ENCODE measurements at regions of chr3 and their contacts with region 1.

Region 1: GRCh38 chr3:138397983-138398382 is 36.4 kb upstream of the ESYT3 start:
- DNase-seq: no peak
- ATAC-seq: no peak
- H3K4me3 ChIP-seq: no peak overlapping the region
- H3K27ac ChIP-seq: peak overlapping the region in 8 of 12 donors; percentile 5 to 96 (median 74)
- H3K4me1 ChIP-seq: peaks cover 0 to 93% (median 29%) of the 10 kb centered on the region in 12 donors
- H3K27me3 ChIP-seq: no peaks in the 10 kb centered on the region
- CTCF ChIP-seq: peak in 5 of 12 donors; percentile 9 to 40 (median 33)
- POLR2A ChIP-seq: no peak

Region 2: DNA sequence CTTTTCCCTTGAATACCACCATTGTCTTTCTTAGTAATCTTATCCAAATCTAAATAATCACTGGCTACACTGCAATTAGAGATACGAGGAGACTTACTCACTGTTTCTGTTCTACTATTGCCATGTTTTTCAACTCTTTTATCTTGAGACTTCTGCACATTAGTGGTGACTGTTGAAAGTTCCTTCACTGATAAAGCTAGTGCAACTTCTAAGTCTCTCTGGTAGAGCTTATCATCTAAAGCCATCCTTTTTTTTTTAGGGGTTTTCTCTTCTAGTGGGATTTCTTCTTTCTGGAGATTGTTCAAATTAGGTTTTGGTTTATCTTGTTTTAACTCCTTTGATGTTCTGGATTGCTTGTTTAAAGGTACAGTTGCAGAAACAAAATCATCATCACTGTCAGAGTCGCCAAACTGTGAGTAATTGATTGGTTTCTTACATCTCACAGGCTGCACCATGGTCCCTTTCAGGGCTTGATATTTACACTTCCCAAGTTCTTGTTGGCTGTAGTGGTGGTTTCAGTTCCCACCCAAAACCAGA is 1498.3 kb before region 1 on chr3:
- intact Hi-C with region 1: no loop called
- DNase-seq: no peak
- ATAC-seq: no peak
- H3K4me3 ChIP-seq: no peak overlapping the region
- H3K27ac ChIP-seq: no peak overlapping the region
- H3K4me1 ChIP-seq: peaks cover 0 to 64% (median 13%) of the 10 kb centered on the region in 12 donors
- H3K27me3 ChIP-seq: no peaks in the 10 kb centered on the region
- CTCF ChIP-seq: no peak
- POLR2A ChIP-seq: no peak

Region 3: GRCh38 chr3:138329127-138329983 is 68.6 kb before region 1 on chr3 and contains the start of gene NME9:
- intact Hi-C with region 1: loop called in 3 of 10 experiments (anchors 2 to 5 kb)
- DNase-seq: peak; percentile 89 to 94 (median 92)
- ATAC-seq: peak; percentile 94 to 98 (median 96)
- H3K4me3 ChIP-seq: peak within 1 kb of the TSS; percentile 47 to 72 (median 66)
- H3K27ac ChIP-seq: peak within 1 kb of the TSS in 9 of 12 donors; percentile 16 to 69 (median 53)
- H3K4me1 ChIP-seq: peaks cover 0 to 18% (median 9%) of the 10 kb centered on the region in 12 donors
- H3K27me3 ChIP-seq: no peaks in the 10 kb centered on the region
- CTCF ChIP-seq: peak; percentile 17 to 62 (median 42)
- POLR2A ChIP-seq: no peak
- total RNA-seq, gene NME9: not detected

Region 4: GRCh38 chr3:138338811-138339210 is 59.2 kb before region 1 on chr3:
- intact Hi-C with region 1: loop called in 3 of 10 experiments (anchors 2 to 5 kb)
- DNase-seq: no peak
- ATAC-seq: peak; percentile 31 to 39 (median 36)
- H3K4me3 ChIP-seq: no peak overlapping the region
- H3K27ac ChIP-seq: no peak overlapping the region
- H3K4me1 ChIP-seq: peaks cover 0 to 12% (median 0%) of the 10 kb centered on the region in 12 donors
- H3K27me3 ChIP-seq: no peaks in the 10 kb centered on the region
- CTCF ChIP-seq: no peak
- POLR2A ChIP-seq: no peak

Region 5: GRCh38 chr3:138347960-138348753 is 49.8 kb before region 1 on chr3 and contains the start of gene MRAS:
- intact Hi-C with region 1: loop called in 6 of 10 experiments (anchors 2 to 5 kb)
- DNase-seq: peak; percentile 82 to 91 (median 89)
- ATAC-seq: peak; percentile 33 to 89 (median 72)
- H3K4me3 ChIP-seq: peak within 1 kb of the TSS; percentile 72 to 97 (median 83)
- H3K27ac ChIP-seq: peak within 1 kb of the TSS; percentile 89 to 99 (median 96)
- H3K4me1 ChIP-seq: peaks cover 0 to 45% (median 30%) of the 10 kb centered on the region in 12 donors
- H3K27me3 ChIP-seq: peaks cover 0 to 3% (median 0%) of the 10 kb centered on the region in 9 donors
- CTCF ChIP-seq: peak; percentile 15 to 69 (median 46)
- POLR2A ChIP-seq: peak; percentile 85 to 99
- total RNA-seq, gene MRAS: 227 to 413 (median 254) TPM

Region 6: GRCh38 chr3:138361561-138361971 is 36.4 kb before region 1 on chr3:
- intact Hi-C with region 1: loop called in 1 of 10 experiments (anchors 5 kb)
- DNase-seq: no peak
- ATAC-seq: peak in 3 of 4 donors; percentile 6 to 22 (median 9)
- H3K4me3 ChIP-seq: no peak overlapping the region
- H3K27ac ChIP-seq: peak overlapping the region in 11 of 12 donors; percentile 52 to 96 (median 72)
- H3K4me1 ChIP-seq: peaks cover 9 to 99% (median 77%) of the 10 kb centered on the region in 12 donors
- H3K27me3 ChIP-seq: no peaks in the 10 kb centered on the region
- CTCF ChIP-seq: no peak
- POLR2A ChIP-seq: peak in 1 of 2 donors; percentile 13

Region 7: GRCh38 chr3:138513090-138513843 is 115.3 kb after region 1 on chr3:
- intact Hi-C with region 1: no loop called
- DNase-seq: no peak
- ATAC-seq: no peak
- H3K4me3 ChIP-seq: no peak overlapping the region
- H3K27ac ChIP-seq: no peak overlapping the region
- H3K4me1 ChIP-seq: peaks cover 0 to 12% (median 0%) of the 10 kb centered on the region in 12 donors
- H3K27me3 ChIP-seq: no peaks in the 10 kb centered on the region
- CTCF ChIP-seq: no peak
- POLR2A ChIP-seq: no peak